ENCODE measurements at regions of chr1 and their contacts with region 1.

Region 1: DNA sequence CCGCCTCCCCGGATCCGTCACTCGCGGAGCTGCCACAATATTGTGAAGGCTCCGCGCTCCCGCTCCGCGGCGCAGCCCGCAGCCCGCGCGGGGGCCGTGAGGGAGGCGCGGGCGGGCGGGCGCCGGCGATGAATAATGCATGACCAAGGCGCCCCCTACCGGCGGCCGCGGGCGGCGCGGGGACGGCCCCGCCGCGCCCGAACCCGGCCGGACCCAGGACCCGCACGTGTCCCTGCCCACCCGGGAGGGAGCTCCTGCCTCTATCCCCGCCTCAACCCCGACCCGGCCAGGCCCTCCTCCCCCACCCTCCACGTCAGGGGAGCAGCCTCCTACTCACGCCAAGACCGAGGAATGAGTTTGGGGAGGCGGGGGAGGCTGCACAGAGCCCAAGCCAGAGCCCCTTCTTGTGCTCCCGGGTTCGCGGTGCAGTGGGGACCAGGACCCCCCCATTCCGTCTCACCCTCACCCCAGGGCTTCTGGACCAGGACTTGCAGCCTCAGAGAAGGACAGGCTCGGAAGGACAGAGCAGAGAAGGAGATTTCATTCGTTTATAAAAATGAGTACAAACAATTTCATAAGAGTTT is 70.8 kb upstream of the CASZ1 start:
- DNase-seq: peak; percentile 74 to 83
- H3K4me3 ChIP-seq: peak overlapping the region; percentile 55 to 63 (median 56)
- H3K27ac ChIP-seq: peak overlapping the region in 2 of 5 donors; percentile 48 to 62
- H3K4me1 ChIP-seq: peaks cover 12 to 38% (median 19%) of the 10 kb centered on the region in 4 donors
- H3K27me3 ChIP-seq: peaks cover 0 to 81% (median 17%) of the 10 kb centered on the region in 3 donors
- CTCF ChIP-seq: peak in 5 of 7 experiments; percentile 7 to 96 (median 79)
- EP300 ChIP-seq: no peak
- POLR2A ChIP-seq: no peak

Region 2: GRCh38 chr1:10507111-10507879 is 359.9 kb before region 1 on chr1:
- intact Hi-C with region 1: loop called (anchors 5 kb)
- DNase-seq: peak; percentile 61 to 85
- H3K4me3 ChIP-seq: no peak overlapping the region
- H3K27ac ChIP-seq: no peak overlapping the region
- H3K4me1 ChIP-seq: peaks cover 19 to 61% (median 43%) of the 10 kb centered on the region in 4 donors
- H3K27me3 ChIP-seq: no peaks in the 10 kb centered on the region
- CTCF ChIP-seq: peak in 5 of 7 experiments; percentile 65 to 81 (median 72)
- EP300 ChIP-seq: no peak
- POLR2A ChIP-seq: no peak